Common myeloid progenitor, CD34-positive (primary cell): ENCODE measurements at regions of chr7 and their contacts with region 1.

Region 1: GRCh38 chr7:134632937-134633540 is 13.6 kb upstream of the BPGM start:
- DNase-seq: peak; percentile 70 to 83 (median 76)
- H3K4me3 ChIP-seq: no peak overlapping the region
- H3K27ac ChIP-seq: no peak overlapping the region
- H3K4me1 ChIP-seq: peaks cover 0 to 7% (median 0%) of the 10 kb centered on the region in 4 experiments
- H3K27me3 ChIP-seq: peaks cover 0 to 2% (median 0%) of the 10 kb centered on the region in 5 experiments

Region 2: DNA sequence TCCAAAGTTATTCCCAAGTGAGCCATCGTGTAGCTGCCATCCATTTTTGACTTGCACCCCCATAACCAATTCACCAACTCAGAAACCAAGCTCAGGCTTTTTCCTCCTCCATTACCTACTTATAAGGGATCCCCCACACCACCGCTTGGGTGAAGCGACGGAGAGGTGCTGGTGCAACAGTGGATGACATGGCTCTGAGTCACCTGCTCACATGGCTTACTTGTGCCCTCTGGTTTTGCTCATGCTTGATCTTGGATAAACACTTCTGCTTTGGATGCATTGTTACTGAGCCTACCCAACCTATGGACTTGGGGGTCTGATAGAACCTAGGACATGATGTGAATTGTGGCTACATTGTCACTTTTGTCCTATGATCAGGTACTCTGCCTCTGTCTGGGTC is 162.2 kb before region 1 on chr7:
- CTCF ChIA-PET with region 1: no interaction called
- POLR2A ChIA-PET with region 1: no interaction called
- DNase-seq: no peak
- H3K4me3 ChIP-seq: no peak overlapping the region
- H3K27ac ChIP-seq: no peak overlapping the region
- H3K4me1 ChIP-seq: no peaks in the 10 kb centered on the region
- H3K27me3 ChIP-seq: no peaks in the 10 kb centered on the region

Region 3: DNA sequence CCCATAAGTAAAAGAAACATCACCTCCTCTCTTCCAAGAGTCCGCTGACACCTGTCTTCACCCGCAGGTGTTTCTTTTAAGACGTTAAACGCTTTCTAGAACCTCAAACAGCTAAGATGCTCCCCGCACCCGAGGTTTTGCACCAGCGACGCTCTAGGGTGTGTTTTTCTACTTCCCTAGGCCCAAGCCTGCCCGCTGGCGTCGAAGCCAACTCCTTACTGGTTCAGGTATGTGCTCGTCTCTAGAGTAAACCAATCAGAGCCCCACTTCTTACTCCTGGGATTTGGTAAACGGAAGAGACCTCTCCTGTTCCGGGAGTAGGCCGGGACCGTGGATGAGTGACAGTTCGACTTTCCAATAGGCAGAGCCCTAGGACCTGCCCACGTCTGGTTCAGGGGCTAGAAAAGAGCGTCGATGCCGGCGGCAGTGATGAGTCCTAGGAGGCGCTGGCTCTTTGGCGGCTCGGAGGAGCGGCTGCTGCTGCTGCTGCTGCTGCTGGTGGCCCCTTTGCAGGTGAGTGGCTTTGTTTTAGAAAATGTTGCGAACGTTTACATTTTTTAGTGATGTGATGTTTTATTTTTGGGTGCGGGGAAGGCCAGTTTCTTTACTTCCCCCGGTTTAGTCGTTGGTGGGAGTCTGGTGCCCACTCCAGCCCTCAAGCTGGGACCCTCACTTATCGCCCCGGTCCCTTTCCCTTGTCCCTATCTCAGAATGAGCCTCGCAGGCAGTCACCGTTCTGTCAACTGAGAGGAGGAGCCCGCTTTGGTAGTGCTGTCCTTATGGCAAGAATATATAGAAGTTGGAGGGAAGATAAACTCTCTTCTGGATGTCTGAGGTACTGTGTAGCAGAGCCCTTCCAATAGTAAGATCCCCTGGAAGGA is 13.6 kb after region 1 on chr7 and contains the start of gene BPGM:
- CTCF ChIA-PET with region 1: interaction called, 90 read pairs
- POLR2A ChIA-PET with region 1: interaction called, 3 read pairs
- DNase-seq: peak; percentile 100
- H3K4me3 ChIP-seq: peak within 1 kb of the TSS; percentile 55 to 96 (median 89)
- H3K27ac ChIP-seq: peak within 1 kb of the TSS; percentile 87 to 95
- H3K4me1 ChIP-seq: peaks cover 9 to 22% (median 15%) of the 10 kb centered on the region in 4 experiments
- H3K27me3 ChIP-seq: no peaks in the 10 kb centered on the region

Region 4: GRCh38 chr7:134690016-134690415 is 57.0 kb after region 1 on chr7:
- CTCF ChIA-PET with region 1: interaction called, 79 read pairs
- POLR2A ChIA-PET with region 1: no interaction called
- DNase-seq: peak in 2 of 3 donors; percentile 28
- H3K4me3 ChIP-seq: no peak overlapping the region
- H3K27ac ChIP-seq: no peak overlapping the region
- H3K4me1 ChIP-seq: peaks cover 0 to 10% (median 4%) of the 10 kb centered on the region in 4 experiments
- H3K27me3 ChIP-seq: peaks cover 0 to 28% (median 4%) of the 10 kb centered on the region in 5 experiments

Region 5: GRCh38 chr7:134707663-134708378 is 74.8 kb after region 1 on chr7:
- CTCF ChIA-PET with region 1: interaction called, 151 read pairs
- POLR2A ChIA-PET with region 1: no interaction called
- DNase-seq: no peak
- H3K4me3 ChIP-seq: no peak overlapping the region
- H3K27ac ChIP-seq: no peak overlapping the region
- H3K4me1 ChIP-seq: no peaks in the 10 kb centered on the region
- H3K27me3 ChIP-seq: peaks cover 0 to 3% (median 0%) of the 10 kb centered on the region in 5 experiments

Region 6: GRCh38 chr7:134954197-134955082 is 321.4 kb after region 1 on chr7:
- CTCF ChIA-PET with region 1: interaction called, 12 read pairs
- POLR2A ChIA-PET with region 1: no interaction called
- DNase-seq: peak; percentile 35 to 57 (median 56)
- H3K4me3 ChIP-seq: no peak overlapping the region
- H3K27ac ChIP-seq: no peak overlapping the region
- H3K4me1 ChIP-seq: no peaks in the 10 kb centered on the region
- H3K27me3 ChIP-seq: no peaks in the 10 kb centered on the region